ENCODE measurements at regions of chr4 and their contacts with region 1.

Region 1: DNA sequence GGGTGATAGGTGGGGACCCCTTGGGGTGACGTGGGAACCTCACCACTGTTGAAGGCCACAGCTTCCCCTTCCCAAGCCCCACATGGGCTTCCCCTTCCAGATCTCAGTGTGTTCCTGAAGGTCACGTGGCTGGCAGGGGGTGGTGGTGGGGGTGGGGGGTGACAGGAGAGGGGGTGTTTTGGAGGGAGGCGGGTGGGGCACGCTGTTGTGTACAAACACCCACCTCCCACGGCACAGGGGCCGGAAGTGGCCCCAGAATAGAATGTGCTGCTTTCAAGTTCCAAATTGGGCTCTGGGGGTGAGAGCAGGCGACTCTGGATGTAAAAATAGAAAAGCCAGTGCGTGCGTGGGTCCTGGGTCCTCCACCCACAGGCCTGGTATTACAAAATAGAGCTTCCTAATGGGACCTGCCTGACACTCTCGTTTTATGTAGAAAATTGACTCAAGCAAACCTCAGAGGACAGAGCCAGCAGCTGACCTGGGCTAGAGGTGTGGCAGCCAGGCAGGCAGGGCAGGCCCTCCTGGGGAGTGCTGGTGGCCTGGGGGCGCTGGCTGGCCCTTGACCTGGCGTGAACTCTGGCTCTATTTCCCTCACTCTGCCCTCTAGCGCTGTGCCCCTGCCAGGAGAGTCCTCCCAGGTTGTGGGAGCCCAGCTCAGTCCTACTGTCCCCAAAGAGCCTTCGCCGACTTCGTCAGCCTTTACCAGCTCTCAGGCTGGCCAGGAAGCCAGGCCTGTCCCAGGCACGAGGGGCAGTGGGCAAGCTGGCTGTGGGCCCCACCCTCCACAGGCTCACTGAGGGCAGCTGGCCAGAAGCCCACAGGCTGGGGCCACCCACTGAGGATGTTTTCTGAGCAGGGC is 5.4 kb upstream of the SH3BP2 start:
- DNase-seq: peak; percentile 32
- H3K4me3 Mint-ChIP-seq: peak overlapping the region; percentile 56
- H3K27ac Mint-ChIP-seq: peak overlapping the region; percentile 92
- H3K4me1 Mint-ChIP-seq: peaks cover 49% of the 10 kb centered on the region
- H3K27me3 Mint-ChIP-seq: no peaks in the 10 kb centered on the region

Region 2: GRCh38 chr4:2702361-2702760 is 85.1 kb before region 1 on chr4:
- intact Hi-C with region 1: no loop called
- DNase-seq: no peak
- H3K4me3 Mint-ChIP-seq: no peak overlapping the region
- H3K27ac Mint-ChIP-seq: no peak overlapping the region
- H3K4me1 Mint-ChIP-seq: peaks cover 4% of the 10 kb centered on the region
- H3K27me3 Mint-ChIP-seq: no peaks in the 10 kb centered on the region

Region 3: DNA sequence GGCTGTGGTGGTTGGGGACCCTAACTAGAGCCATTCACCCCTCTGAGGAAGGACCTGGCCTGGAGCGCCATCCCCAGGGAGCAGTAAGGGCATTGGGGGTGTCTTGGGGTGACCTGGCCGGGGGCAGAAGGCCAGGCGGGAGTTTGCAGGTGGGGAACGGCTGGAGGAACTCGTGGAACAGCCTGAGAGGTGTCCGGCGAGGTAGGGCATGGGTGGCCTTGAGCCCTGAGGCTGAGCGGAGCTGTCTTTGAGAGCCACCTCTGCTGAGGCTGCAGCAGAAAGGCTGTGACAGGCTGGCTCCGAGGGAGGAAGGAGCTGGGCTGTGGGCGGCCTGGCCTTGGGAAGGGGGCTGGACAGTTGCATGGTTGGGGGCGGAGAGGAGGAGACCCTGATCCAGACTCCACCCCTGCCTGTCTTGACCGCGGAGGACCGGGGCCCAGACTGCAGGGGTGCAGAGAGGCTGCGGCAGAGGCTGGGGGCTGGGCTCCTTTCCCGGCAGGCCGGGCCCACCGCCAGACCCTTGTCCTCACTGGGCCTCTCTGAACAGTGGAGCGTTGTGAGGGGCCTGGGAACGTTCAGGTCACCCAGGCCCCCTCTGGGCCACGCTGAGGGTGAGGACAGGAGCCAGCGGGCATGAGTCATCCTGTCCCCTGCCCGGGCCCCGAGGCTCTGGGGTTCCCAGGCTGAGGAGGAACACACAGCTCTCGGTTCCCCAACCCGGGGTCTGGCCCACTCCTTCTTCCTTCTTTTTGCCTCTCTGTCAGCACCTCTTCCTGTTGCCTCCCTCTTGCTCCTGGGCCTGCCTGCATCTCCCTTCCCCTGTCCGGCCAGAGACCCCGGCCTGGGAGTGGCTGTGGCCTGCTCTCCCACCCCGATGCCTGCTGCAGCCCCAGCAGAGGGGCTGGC is 13.5 kb after region 1 on chr4:
- intact Hi-C with region 1: loop called (anchors 1 kb)
- DNase-seq: no peak
- H3K4me3 Mint-ChIP-seq: peak overlapping the region; percentile 78
- H3K27ac Mint-ChIP-seq: peak overlapping the region; percentile 48
- H3K4me1 Mint-ChIP-seq: peaks cover 36% of the 10 kb centered on the region
- H3K27me3 Mint-ChIP-seq: no peaks in the 10 kb centered on the region

Region 4: DNA sequence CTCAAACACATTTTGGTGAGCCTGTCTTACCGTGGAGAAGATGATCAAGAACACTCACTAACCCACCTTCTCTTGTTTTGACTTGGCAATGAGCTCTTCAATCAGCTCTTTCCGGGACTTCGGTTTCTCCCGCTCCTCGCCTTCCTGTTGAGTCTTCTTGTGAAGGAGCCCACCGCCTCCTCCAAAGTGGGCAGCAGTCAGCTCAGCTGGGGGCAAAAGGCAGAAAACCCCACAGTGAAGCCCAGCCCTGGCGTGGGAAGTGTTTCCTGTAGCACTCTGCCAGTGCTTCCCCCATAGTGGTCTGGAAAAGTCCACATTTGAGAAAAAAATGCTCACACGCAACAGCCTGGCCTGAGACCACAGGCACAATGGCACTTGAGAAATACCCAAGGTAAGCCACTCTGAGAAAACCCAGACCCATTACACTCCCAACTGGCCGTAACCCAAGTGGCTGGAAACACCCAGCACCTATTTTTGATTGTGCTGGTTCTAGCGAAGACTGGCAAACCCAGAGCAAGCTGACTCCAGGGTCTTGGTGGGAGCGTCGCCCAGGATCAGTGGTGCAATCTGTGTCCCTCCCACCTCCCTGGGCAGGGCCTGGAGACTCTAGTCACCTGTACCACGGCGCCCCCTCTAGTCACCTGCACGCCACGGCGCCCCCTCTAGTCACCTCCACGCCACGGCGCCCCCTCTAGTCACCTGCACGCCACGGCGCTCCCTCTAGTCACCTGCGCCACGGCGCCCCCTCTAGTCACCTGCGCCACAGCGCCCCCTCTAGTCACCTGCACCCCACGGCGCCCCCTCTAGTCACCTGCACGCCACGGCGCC is 167.1 kb after region 1 on chr4:
- intact Hi-C with region 1: loop called (anchors 2 kb)
- DNase-seq: peak; percentile 64
- H3K4me3 Mint-ChIP-seq: peak overlapping the region; percentile 80
- H3K27ac Mint-ChIP-seq: peak overlapping the region; percentile 98
- H3K4me1 Mint-ChIP-seq: peaks cover 72% of the 10 kb centered on the region
- H3K27me3 Mint-ChIP-seq: no peaks in the 10 kb centered on the region